ENCODE measurements at regions of chr18 and their contacts with region 1.

Region 1: GRCh38 chr18:44130376-44130942 is 550.2 kb upstream of the SETBP1 start:
- DNase-seq: peak; percentile 64
- H3K4me3 ChIP-seq: no peak overlapping the region
- H3K27ac ChIP-seq: no peak overlapping the region
- H3K4me1 ChIP-seq: no peaks in the 10 kb centered on the region
- H3K27me3 ChIP-seq: no peaks in the 10 kb centered on the region
- CTCF ChIP-seq: peak; percentile 74

Region 2: GRCh38 chr18:44180683-44181082 is 50.2 kb after region 1 on chr18:
- CTCF ChIA-PET with region 1: no interaction called
- POLR2A ChIA-PET with region 1: no interaction called
- intact Hi-C with region 1: no loop called
- DNase-seq: no peak
- H3K4me3 ChIP-seq: no peak overlapping the region
- H3K27ac ChIP-seq: no peak overlapping the region
- H3K4me1 ChIP-seq: no peaks in the 10 kb centered on the region
- H3K27me3 ChIP-seq: no peaks in the 10 kb centered on the region
- CTCF ChIP-seq: no peak

Region 3: DNA sequence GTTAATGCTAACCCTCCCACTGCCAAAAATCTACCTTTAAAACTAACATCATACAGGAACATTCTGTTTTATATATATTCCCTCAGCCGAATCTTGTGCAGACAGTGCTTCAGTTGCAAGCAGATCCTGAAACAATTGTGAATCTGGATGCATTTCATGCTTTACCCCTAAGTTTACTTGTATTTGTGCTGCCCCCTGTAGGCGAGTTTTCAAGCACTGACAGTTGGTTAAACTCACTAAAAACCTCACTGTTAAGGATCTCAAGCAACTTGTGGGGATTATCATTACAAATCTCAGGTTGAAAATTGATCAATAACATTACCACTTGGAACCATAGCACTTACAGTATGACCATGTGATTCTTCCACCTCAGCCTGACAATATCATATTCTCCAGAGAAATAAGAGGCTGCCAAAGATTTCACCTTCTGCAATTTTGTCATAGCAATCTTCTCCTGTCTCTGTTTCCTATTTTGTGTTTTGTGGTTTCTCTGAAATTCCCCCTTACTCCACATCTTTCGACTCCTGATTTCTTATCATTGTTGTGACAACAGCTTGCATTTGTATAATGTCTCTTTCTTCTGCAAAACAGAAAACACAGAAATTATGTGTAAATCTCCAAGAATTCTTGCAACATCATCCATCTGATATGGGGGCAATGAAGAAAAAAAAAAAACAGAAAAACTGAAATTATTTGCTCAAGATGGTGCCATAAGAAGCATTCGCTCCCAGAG is 195.6 kb after region 1 on chr18:
- CTCF ChIA-PET with region 1: no interaction called
- POLR2A ChIA-PET with region 1: no interaction called
- intact Hi-C with region 1: loop called (anchors 10 kb)
- DNase-seq: peak; percentile 65
- H3K4me3 ChIP-seq: no peak overlapping the region
- H3K27ac ChIP-seq: no peak overlapping the region
- H3K4me1 ChIP-seq: no peaks in the 10 kb centered on the region
- H3K27me3 ChIP-seq: no peaks in the 10 kb centered on the region
- CTCF ChIP-seq: peak; percentile 70

Region 4: DNA sequence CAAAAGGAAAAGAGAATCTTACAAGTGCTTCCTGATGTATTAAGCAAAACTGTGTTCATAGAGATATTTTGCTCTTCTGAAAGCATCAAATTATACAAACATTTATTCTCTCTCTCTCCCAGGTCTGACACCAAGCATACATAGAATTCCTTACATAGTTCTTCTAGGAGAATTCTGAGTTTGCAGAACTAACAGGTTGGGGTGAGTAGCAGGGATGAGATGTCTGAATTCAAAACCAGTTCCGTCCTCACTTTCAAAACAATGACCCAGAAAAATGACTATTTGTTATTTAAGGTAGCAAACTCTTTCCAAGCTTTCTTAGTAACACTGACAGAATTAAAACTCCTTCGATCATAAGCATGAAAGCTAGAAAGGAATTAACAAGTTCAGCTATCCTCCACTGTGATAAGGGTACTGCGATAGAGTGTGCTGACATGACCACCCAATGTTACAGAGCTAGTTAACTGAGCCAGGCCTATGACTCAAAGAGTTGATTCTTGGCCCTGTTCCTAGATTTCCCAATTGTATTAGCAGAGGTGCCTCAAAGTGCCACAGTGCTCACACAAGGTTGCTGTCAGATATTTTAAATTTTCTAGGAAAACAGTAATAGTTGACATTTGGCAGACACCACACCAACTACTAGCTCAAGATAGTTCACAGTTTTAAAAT is 464.5 kb after region 1 on chr18:
- CTCF ChIA-PET with region 1: no interaction called
- POLR2A ChIA-PET with region 1: no interaction called
- intact Hi-C with region 1: no loop called
- DNase-seq: peak; percentile 45
- H3K4me3 ChIP-seq: no peak overlapping the region
- H3K27ac ChIP-seq: no peak overlapping the region
- H3K4me1 ChIP-seq: peaks cover 5% of the 10 kb centered on the region
- H3K27me3 ChIP-seq: no peaks in the 10 kb centered on the region
- CTCF ChIP-seq: no peak

Region 5: GRCh38 chr18:45212181-45213039 is 1082.0 kb after region 1 on chr18:
- CTCF ChIA-PET with region 1: no interaction called
- POLR2A ChIA-PET with region 1: no interaction called
- intact Hi-C with region 1: loop called (anchors 2 kb)
- DNase-seq: peak; percentile 87
- H3K4me3 ChIP-seq: no peak overlapping the region
- H3K27ac ChIP-seq: no peak overlapping the region
- H3K4me1 ChIP-seq: no peaks in the 10 kb centered on the region
- H3K27me3 ChIP-seq: no peaks in the 10 kb centered on the region
- CTCF ChIP-seq: peak; percentile 99

Region 6: DNA sequence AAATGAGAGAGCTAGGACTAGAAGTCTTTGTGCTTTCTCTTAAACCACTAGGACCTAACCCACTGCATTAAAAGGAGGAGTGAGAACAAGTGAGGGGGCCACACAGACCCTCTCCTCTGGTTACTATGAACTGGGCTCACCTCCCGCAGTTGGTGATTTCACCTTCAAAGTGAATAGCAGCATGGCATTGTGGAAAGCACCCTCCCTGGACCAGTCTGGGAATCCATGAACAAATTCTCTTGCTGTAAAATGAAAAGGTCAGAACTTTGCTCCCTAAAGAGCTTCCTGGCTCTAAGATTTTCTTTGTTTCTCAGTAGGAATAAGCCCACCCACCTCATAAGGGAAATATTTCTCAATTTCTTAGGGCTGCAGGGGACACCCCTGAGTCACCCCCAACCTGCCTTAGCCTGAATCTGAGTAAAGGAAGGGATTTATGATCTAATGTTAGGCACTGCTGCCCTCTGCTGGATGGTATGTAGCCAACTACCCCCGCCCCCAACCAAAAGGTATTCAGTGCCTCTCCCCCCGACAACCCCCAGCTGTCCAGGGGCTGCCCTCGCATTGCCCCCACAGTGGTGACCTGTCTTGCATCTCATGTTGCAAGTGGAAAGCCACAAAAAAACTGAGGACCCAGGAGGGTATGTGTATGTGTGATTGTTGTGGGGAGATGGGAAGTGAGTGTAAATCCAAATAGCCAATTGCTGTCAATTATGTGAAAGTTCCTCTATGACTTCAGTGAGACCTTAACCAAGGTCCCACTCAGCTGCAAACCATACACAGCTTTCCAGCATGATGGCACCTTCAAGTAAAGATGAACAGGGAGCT is 1253.9 kb after region 1 on chr18:
- CTCF ChIA-PET with region 1: no interaction called
- POLR2A ChIA-PET with region 1: no interaction called
- intact Hi-C with region 1: loop called (anchors 5 kb)
- DNase-seq: peak; percentile 60
- H3K4me3 ChIP-seq: no peak overlapping the region
- H3K27ac ChIP-seq: no peak overlapping the region
- H3K4me1 ChIP-seq: no peaks in the 10 kb centered on the region
- H3K27me3 ChIP-seq: peaks cover 9% of the 10 kb centered on the region
- CTCF ChIP-seq: peak; percentile 78